ENCODE measurements at regions of chr22 and their contacts with region 1.

Region 1: DNA sequence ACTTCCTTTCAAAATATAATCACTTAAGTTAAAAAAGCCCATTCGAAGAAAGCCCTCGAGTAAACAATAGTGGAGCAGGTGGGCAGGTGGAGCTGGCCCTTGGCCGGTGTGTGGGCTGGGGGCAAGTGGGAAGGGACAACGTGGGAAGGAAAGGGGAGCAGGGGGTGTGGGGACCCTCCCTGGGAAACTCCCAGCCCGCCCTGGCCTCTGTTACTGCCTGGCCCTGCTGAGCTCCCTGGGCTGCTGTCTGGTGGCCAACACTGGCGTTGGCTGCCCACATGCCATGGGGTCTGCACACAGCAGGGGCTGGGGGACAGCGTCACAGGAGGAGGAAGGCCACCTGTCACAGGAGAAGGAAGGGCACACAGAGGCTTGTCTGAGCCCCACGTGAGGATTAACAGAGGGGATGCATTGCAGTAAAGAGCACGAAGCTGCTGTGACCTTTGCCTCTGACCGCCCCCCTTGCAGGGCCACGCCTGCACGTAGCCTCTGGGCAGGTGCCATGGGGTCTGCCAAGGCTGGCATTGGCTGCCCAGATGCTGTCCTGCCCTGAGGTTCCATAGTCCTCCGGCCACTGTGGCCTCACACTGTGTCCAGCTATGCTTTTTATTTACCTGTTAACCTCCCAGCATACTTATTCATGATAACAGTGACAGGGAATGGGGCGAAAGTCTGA is 36.2 kb upstream of the CCDC188 start:
- DNase-seq: no peak

Region 2: DNA sequence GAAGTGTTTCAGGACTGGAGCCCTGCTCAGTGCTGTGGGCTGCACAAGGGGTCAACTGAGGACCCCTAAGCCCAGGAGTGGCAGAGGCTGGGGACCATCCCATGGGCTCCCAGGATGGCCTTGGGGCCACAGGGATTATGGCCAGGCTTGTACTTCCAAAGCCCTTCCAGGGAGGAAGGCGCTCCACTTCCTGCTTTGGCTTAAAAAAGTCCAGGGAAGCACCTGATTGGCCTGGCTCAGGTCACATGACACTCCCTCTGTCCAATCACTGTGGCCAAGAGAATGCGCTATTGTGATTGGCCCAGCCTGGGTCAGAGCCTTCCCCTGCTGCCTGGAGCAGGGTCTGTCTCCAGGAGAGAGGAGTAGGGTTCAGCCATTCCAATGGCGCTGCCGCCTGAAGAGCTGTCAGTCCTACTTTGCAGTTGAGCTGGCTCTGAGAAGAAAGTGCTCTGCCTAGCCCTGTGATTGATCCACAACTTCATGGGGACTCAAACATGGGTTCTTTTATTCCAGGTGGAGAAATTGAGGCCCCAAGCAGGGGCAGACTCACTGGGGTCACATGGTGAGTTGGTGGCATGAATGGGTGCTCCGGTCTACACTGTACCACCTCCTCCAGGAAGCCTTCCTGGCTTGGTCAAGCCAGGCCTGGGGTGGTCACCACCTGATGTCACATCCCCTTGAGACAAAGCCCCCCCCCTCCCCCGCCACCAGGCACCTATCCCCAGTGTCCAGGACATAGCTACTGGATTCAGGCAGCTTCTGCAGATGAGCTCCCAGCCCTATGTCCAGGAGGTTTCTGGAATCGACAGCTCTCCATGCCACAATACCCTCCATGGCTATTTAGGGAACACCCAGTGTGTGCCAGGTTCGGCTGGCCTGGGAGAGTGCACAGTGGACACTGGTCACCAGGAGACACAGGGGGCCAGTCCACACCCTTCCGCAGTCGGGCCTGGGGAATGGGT is 32.9 kb after region 1 on chr22:
- intact Hi-C with region 1: loop called in 1 of 2 experiments (anchors 1 kb)
- DNase-seq: no peak